ENCODE measurements at regions of chr7 and their contacts with region 1.

Region 1: GRCh38 chr7:106056513-106057203 is 55.5 kb downstream of the SYPL1 start:
- DNase-seq: peak; percentile 93
- H3K4me3 ChIP-seq: peak overlapping the region; percentile 52
- H3K27ac ChIP-seq: peak overlapping the region; percentile 98
- H3K4me1 ChIP-seq: peaks cover 87% of the 10 kb centered on the region
- CTCF ChIP-seq: peak; percentile 96

Region 2: DNA sequence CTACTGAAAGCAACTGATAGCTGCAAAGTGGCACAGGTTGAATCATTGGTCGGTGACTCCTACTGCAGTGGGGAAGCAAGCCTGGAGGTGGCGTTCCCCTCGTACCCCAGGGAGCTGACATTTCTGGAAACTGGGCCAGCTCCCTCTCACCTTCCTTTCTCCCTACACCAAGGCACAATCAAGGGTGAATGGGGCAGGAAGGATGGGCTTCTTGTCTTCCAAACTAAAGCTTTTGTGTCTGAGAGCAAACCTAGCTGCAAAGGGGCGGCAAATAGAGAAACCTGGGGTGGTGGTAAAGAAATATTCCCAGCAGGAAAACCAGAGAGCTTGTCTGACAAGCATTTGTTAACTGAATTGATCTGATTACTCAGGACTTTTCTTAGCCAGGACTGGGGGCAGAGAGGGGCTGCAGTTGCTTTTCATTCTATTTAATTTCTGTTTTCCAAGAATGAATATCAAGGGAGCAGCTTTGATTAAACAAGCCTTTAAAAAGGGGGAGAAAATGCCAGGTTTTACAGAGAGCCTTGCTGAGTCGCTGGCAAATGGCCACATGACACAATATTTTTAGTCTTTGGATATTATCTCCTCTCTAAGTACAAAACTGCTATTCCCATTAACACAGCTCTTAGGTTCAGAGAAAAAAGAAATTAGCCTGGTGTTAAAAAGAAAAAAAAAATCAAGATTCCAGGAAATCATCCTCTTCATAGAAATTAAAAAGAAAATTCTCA is 65.8 kb before region 1 on chr7:
- CTCF ChIA-PET with region 1: no interaction called
- POLR2A ChIA-PET with region 1: no interaction called
- intact Hi-C with region 1: no loop called
- DNase-seq: no peak
- H3K4me3 ChIP-seq: no peak overlapping the region
- H3K27ac ChIP-seq: no peak overlapping the region
- H3K4me1 ChIP-seq: no peaks in the 10 kb centered on the region
- CTCF ChIP-seq: no peak

Region 3: GRCh38 chr7:106071356-106071998 is 14.8 kb after region 1 on chr7:
- CTCF ChIA-PET with region 1: interaction called, 52 read pairs
- POLR2A ChIA-PET with region 1: interaction called, 308 read pairs
- intact Hi-C with region 1: loop called (anchors 1 kb)
- DNase-seq: peak; percentile 96
- H3K4me3 ChIP-seq: peak overlapping the region; percentile 70
- H3K27ac ChIP-seq: peak overlapping the region; percentile 96
- H3K4me1 ChIP-seq: peaks cover 98% of the 10 kb centered on the region
- CTCF ChIP-seq: no peak

Region 4: DNA sequence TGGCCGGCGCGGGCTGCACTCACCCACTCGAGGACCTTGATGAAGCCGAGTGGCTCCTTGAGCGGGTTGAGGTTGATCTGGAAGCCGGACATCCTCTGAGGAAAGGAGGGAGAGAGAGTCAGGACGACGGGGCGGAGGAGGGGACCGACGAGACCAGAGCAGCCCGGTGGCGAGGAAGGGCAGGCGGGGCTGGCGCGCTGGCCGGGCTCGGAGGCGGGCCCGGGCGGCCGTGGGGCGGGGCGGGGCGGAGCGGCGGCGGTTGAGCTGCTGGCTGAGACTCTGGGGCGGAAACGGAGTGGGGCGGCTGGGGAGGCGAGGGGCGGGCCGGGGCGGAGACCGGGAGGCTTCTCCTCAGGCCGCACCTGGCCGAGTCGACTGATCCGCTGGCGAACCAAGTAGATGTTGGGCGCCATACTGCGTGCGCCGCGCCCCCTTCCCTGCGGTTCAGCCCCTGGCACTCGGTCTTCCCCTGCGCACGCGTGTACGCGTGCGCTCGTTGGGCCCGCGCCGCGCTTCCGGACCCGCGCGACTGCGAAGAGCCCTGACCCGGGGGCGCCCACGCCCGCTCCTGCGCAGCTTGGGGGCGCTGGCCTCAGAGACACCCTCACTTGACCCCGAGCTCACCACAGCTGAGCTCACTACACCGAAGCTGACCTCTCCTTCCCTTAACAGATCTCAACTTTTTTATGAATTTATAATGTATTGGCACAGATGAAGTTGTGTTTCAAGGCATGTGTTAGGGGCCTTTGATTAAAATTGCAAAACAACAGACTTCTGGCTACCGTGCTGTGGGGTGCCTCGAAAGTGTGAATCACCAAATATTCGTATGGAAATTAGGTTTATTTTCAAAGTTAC is 55.7 kb after region 1 on chr7 and contains the start of gene SYPL1:
- CTCF ChIA-PET with region 1: interaction called, 4 read pairs
- POLR2A ChIA-PET with region 1: interaction called, 66 read pairs
- intact Hi-C with region 1: loop called (anchors 1 kb)
- DNase-seq: peak; percentile 96
- H3K4me3 ChIP-seq: peak within 1 kb of the TSS; percentile 80
- H3K27ac ChIP-seq: peak within 1 kb of the TSS; percentile 83
- H3K4me1 ChIP-seq: peaks cover 62% of the 10 kb centered on the region
- CTCF ChIP-seq: peak; percentile 52; the same call in 1 of the 2 replicates
- total RNA-seq, gene SYPL1: 30.4 and 34.1 TPM in 2 replicates

Region 5: GRCh38 chr7:106153891-106154449 is 97.3 kb after region 1 on chr7:
- CTCF ChIA-PET with region 1: interaction called, 46 read pairs
- POLR2A ChIA-PET with region 1: interaction called, 104 read pairs
- intact Hi-C with region 1: loop called (anchors 1 kb)
- DNase-seq: peak; percentile 89
- H3K4me3 ChIP-seq: no peak overlapping the region
- H3K27ac ChIP-seq: peak overlapping the region; percentile 15
- H3K4me1 ChIP-seq: peaks cover 59% of the 10 kb centered on the region
- CTCF ChIP-seq: peak; percentile 99

Region 6: DNA sequence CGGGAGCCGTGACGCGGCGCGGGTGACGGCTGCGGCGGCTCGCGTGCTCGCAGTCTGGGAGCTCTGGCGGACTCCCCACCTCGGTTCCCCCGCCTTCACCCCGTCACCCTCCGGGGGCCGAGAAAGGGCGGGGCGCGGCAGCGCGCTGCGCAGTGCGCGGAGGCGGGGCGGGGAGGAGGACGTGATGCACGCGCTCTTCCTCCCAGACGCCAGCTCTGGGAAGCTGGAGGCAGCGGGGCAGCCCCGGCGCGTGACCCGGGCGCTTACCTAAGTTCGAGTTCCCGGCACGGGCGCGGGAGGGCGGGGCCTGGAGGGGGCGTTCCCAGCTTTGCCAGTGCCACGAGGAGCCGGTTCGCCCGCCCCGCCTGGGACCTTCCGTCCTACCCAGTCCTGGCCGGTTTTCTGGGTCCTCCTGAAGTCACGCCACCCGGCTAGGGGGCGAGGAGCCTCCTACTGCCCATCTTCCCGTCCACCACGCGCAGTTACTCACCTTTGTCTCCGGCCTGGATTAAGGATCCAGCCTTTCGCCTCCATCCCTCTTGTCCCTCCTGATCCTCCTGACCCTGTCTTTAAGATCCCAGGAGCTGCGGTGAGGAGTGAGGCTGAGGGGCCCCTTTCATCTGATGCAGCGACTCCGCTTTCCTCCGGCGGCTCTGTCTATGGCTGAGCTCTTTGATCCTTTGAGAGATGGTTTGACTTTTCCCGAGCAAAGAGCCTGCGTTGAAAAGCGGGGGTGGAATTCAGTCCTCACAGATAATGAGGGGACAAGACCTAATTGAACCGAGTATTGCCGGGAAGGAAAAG is 228.6 kb after region 1 on chr7:
- CTCF ChIA-PET with region 1: no interaction called
- POLR2A ChIA-PET with region 1: no interaction called
- intact Hi-C with region 1: loop called (anchors 5 kb)
- DNase-seq: peak; percentile 95
- H3K4me3 ChIP-seq: peak overlapping the region; percentile 90
- H3K27ac ChIP-seq: peak overlapping the region; percentile 61
- H3K4me1 ChIP-seq: peaks cover 23% of the 10 kb centered on the region
- CTCF ChIP-seq: no peak